ENCODE measurements at regions of chr20 and their contacts with region 1.

Region 1: GRCh38 chr20:13336308-13337089 is 115.4 kb downstream of the ISM1 start:
- DNase-seq: no peak
- ATAC-seq: no peak
- H3K4me3 ChIP-seq: no peak overlapping the region
- H3K4me3 Mint-ChIP-seq: no peak overlapping the region
- H3K27ac ChIP-seq: no peak overlapping the region
- H3K27ac Mint-ChIP-seq: no peak overlapping the region
- H3K4me1 ChIP-seq: no peaks in the 10 kb centered on the region
- H3K4me1 Mint-ChIP-seq: peaks cover 0 to 6% (median 0%) of the 10 kb centered on the region in 7 donors
- H3K27me3 ChIP-seq: no peaks in the 10 kb centered on the region
- H3K27me3 Mint-ChIP-seq: peaks cover 0 to 5% (median 0%) of the 10 kb centered on the region in 5 donors

Region 2: DNA sequence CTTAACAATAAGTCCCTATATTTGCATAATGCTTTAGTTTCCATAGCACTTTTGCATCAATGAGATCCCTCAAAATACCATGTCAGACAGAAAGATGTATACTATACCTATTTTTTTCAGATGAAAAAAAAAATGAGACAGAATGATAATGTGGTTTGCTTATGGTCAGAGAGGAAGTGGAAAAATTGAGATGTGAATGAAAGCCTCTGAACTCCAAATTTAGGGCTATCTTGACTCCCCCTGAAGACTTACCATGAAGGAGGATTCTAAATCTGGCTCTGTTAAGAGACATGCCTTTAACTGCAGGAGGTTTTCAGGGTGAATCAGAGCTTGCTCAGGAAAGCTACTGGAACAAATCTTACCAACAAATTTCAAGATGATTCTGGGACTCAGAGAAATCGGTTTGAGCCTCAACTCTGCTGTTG is 60.8 kb after region 1 on chr20:
- CTCF ChIA-PET with region 1: no interaction called
- POLR2A ChIA-PET with region 1: no interaction called
- intact Hi-C with region 1: loop called in 1 of 2 experiments (anchors 10 kb)
- DNase-seq: no peak
- ATAC-seq: no peak
- H3K4me3 ChIP-seq: no peak overlapping the region
- H3K4me3 Mint-ChIP-seq: no peak overlapping the region
- H3K27ac ChIP-seq: no peak overlapping the region
- H3K27ac Mint-ChIP-seq: no peak overlapping the region
- H3K4me1 ChIP-seq: no peaks in the 10 kb centered on the region
- H3K4me1 Mint-ChIP-seq: no peaks in the 10 kb centered on the region
- H3K27me3 ChIP-seq: no peaks in the 10 kb centered on the region
- H3K27me3 Mint-ChIP-seq: no peaks in the 10 kb centered on the region

Region 3: GRCh38 chr20:13891575-13891974 is 555.1 kb after region 1 on chr20:
- CTCF ChIA-PET with region 1: no interaction called
- POLR2A ChIA-PET with region 1: no interaction called
- intact Hi-C with region 1: no loop called
- DNase-seq: no peak
- ATAC-seq: no peak
- H3K4me3 ChIP-seq: no peak overlapping the region
- H3K4me3 Mint-ChIP-seq: no peak overlapping the region
- H3K27ac ChIP-seq: no peak overlapping the region
- H3K27ac Mint-ChIP-seq: no peak overlapping the region
- H3K4me1 ChIP-seq: no peaks in the 10 kb centered on the region
- H3K4me1 Mint-ChIP-seq: no peaks in the 10 kb centered on the region
- H3K27me3 ChIP-seq: no peaks in the 10 kb centered on the region
- H3K27me3 Mint-ChIP-seq: peaks cover 0 to 8% (median 0%) of the 10 kb centered on the region in 5 donors